ENCODE measurements at regions of chr11 and their contacts with region 1.

Region 1: DNA sequence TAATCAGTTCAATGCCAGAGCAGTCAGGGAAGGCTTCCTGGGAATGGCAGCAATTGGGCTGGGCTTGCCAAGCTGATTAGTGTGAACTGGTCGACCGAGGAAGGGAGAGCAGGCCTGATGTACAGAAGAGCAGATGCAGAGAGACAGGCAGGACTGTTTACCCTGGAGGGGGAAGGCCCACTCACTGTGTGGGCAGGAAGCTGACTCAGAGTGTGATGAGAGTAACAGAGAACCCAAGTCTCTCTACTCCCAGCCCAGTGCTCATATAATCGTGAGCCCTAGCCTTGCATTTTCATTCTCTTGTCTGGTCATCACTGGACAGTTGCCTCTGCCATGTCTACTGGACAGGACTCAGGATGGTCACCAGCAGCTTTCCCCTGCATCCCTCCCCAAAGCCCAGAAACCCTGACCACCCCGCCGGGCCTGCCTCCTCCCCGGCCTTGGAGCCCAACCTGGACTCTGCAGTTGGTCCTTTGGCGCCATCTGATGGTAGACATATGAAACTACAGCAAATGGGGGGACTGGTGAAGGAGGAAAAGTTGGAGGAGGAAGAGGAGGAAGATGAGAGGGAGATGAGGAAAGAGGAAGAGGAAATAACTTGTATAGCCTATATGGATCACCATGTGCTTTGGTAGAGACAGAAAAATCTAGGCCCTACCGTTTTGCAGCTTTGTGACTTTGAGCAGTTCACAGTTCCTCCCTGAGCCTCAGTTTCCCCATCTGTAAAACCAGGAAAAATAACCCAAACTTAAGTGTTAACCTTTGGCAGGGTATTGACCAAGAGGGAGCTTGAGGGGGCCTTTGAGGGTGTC is 43.4 kb upstream of the PRDM11 start:
- DNase-seq: peak in 2 of 3 donors; percentile 59 to 64
- ATAC-seq: peak; percentile 70 to 84 (median 81)
- H3K4me3 ChIP-seq: no peak overlapping the region
- H3K27ac ChIP-seq: no peak overlapping the region
- H3K4me1 ChIP-seq: peaks cover 0 to 2% (median 0%) of the 10 kb centered on the region in 4 donors
- H3K27me3 ChIP-seq: no peaks in the 10 kb centered on the region
- CTCF ChIP-seq: peak; percentile 91 to 97 (median 94)
- POLR2A ChIP-seq: no peak

Region 2: GRCh38 chr11:44861849-44862749 is 240.9 kb before region 1 on chr11:
- intact Hi-C with region 1: no loop called
- DNase-seq: peak in 1 of 3 donors; percentile 49
- ATAC-seq: peak; percentile 5 to 69 (median 36)
- H3K4me3 ChIP-seq: no peak overlapping the region
- H3K27ac ChIP-seq: no peak overlapping the region
- H3K4me1 ChIP-seq: peaks cover 0 to 3% (median 0%) of the 10 kb centered on the region in 4 donors
- H3K27me3 ChIP-seq: no peaks in the 10 kb centered on the region
- CTCF ChIP-seq: no peak
- POLR2A ChIP-seq: no peak

Region 3: GRCh38 chr11:44927174-44927661 is 175.8 kb before region 1 on chr11:
- intact Hi-C with region 1: loop called in 1 of 2 experiments (anchors 5 kb)
- DNase-seq: peak; percentile 68 to 73 (median 71)
- ATAC-seq: peak; percentile 64 to 77 (median 76)
- H3K4me3 ChIP-seq: no peak overlapping the region
- H3K27ac ChIP-seq: no peak overlapping the region
- H3K4me1 ChIP-seq: no peaks in the 10 kb centered on the region
- H3K27me3 ChIP-seq: no peaks in the 10 kb centered on the region
- CTCF ChIP-seq: peak; percentile 78 to 85 (median 82)
- POLR2A ChIP-seq: no peak

Region 4: DNA sequence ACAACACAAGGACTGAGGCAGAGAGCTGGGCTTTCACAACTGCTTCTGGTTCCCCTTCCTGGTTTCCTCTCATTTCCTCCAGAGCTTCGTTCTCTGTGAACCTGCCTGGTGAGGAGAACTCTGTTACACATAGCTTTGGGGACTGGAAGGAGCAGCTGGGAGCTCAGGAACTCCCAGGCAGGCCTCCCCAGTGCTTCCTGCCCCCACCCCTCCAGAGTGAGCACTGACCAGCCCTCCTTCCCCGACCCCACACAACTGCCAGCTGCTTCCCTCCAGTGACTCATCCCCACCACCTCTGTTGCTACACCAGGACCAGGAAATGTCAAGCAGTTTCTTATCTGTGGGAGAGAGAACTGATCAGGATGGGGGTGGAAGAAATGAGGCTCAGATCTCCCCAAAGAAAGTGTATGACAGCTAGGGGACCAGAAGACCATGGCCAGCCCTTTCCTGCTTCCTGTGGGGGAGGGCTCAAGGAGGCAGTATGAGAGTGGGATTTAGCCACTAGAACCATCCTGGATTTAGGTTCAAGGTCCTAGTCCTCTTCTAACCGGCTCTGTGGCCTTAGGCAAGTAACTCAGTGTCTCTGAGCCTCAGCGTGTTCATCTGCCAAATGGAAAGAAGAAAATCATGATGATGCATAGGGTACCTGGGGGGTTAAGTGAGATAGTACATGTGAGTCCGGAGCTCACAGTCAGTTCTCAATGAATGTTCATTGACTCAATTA is 147.8 kb before region 1 on chr11:
- intact Hi-C with region 1: no loop called
- DNase-seq: peak in 2 of 3 donors; percentile 60 to 80
- ATAC-seq: peak; percentile 59 to 80 (median 70)
- H3K4me3 ChIP-seq: no peak overlapping the region
- H3K27ac ChIP-seq: peak overlapping the region in 1 of 3 donors; percentile 38
- H3K4me1 ChIP-seq: peaks cover 0 to 4% (median 0%) of the 10 kb centered on the region in 4 donors
- H3K27me3 ChIP-seq: peaks cover 0 to 4% of the 10 kb centered on the region in 2 donors
- CTCF ChIP-seq: no peak
- POLR2A ChIP-seq: no peak

Region 5: DNA sequence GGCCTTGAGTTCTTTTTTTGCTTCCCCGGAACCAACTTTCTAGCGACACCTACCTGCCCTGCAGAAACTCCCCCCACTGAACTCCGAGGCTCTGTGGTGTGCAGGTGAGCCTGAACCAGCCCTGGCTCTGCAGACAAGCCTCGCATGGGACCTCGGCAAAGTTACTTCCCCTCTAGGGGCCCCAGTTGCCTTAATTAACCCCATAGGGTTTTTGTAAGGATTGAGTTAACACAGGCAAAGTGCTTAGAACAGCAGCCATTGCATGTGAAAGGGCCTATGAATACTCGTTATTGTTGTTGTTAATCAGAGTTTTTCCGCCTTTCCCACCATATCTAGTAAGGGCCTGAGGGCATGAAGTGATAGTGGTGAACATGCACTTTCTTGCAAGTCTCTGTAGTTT is 195.7 kb after region 1 on chr11:
- intact Hi-C with region 1: loop called (anchors 5 to 10 kb)
- DNase-seq: no peak
- ATAC-seq: no peak
- H3K4me3 ChIP-seq: no peak overlapping the region
- H3K27ac ChIP-seq: no peak overlapping the region
- H3K4me1 ChIP-seq: no peaks in the 10 kb centered on the region
- H3K27me3 ChIP-seq: no peaks in the 10 kb centered on the region
- CTCF ChIP-seq: no peak
- POLR2A ChIP-seq: no peak